ENCODE measurements at regions of chr17 and their contacts with region 1.

Region 1: GRCh38 chr17:46940621-46941404 is 17.9 kb downstream of the GOSR2 start:
- DNase-seq: peak; percentile 56 to 89
- H3K4me3 ChIP-seq: no peak overlapping the region
- H3K27ac ChIP-seq: no peak overlapping the region
- H3K4me1 ChIP-seq: peaks cover 6 to 16% (median 9%) of the 10 kb centered on the region in 4 experiments
- H3K27me3 ChIP-seq: no peaks in the 10 kb centered on the region
- CTCF ChIP-seq: peak; percentile 90 to 98 (median 90)
- EP300 ChIP-seq: no peak
- POLR2A ChIP-seq: no peak
- RAD21 ChIP-seq: peak; percentile 93 to 94

Region 2: GRCh38 chr17:46841561-46842379 is 99.0 kb before region 1 on chr17:
- CTCF ChIA-PET with region 1: interaction called, 81 read pairs
- POLR2A ChIA-PET with region 1: interaction called, 3 read pairs
- DNase-seq: peak in 1 of 2 experiments; percentile 92
- H3K4me3 ChIP-seq: peak overlapping the region; percentile 10 to 48 (median 40); a peak in 7 of 8 replicates
- H3K27ac ChIP-seq: no peak overlapping the region
- H3K4me1 ChIP-seq: no peaks in the 10 kb centered on the region; a peak in 1 of 7 replicates
- H3K27me3 ChIP-seq: peaks cover 3 to 12% (median 11%) of the 10 kb centered on the region in 4 experiments
- CTCF ChIP-seq: peak; percentile 85 to 96 (median 90)
- EP300 ChIP-seq: 0 out of 3 replicates have a peak, but pooled peaks of 1 of the 2 experiments have one; percentile 26
- POLR2A ChIP-seq: no peak
- RAD21 ChIP-seq: peak; percentile 77 to 87

Region 3: DNA sequence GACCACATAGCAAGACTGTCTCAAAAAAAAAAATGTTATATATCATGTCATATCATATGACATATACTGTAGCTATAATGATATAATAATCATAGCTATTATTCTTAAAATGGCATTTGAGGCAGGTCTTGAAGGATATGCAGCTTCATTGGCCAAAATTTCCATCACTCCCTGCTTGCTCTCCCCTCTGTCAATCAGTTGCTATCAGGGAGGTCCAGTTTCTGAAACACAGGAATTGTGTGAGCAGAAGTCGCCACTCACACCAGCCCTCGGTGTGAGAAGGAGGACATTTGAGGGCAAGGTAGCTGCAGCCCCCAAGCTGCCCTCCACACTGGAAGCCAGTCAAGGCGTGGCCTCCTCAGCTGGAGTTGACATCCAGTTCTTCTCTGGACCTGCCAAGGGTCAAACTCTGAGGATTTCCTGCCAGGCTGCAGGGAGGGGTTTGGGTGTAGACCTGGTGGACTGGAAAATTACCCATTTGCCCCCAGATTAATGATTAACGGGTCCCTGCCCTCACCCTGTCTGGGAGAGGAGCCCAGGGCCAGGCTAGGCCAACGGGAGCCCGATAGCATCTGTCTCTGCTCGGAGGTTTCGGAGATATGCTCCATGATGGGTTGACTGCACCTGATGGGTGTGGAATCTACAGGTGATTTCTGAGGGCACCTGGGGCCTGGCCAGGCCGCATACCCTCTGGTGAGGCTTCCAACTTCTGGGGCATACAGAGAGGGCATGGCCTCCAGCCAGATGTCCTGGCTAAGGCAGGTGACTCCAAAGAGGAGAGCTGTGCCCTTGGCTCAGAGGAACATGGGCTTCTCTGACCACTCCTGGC is 70.6 kb before region 1 on chr17:
- CTCF ChIA-PET with region 1: interaction called, 28 read pairs
- POLR2A ChIA-PET with region 1: no interaction called
- DNase-seq: no peak
- H3K4me3 ChIP-seq: no peak overlapping the region
- H3K27ac ChIP-seq: no peak overlapping the region
- H3K4me1 ChIP-seq: peaks cover 0 to 2% (median under 1%) of the 10 kb centered on the region in 4 experiments; a peak in 1 of 7 replicates
- H3K27me3 ChIP-seq: peaks cover 0 to 3% (median 0%) of the 10 kb centered on the region in 4 experiments; a peak in 2 of 7 replicates
- CTCF ChIP-seq: no peak
- EP300 ChIP-seq: no peak
- POLR2A ChIP-seq: no peak
- RAD21 ChIP-seq: no peak

Region 4: GRCh38 chr17:46964315-46965253 is 23.8 kb after region 1 on chr17:
- CTCF ChIA-PET with region 1: interaction called, 26 read pairs
- POLR2A ChIA-PET with region 1: interaction called, 26 read pairs
- DNase-seq: peak in 1 of 2 experiments; percentile 66
- H3K4me3 ChIP-seq: no peak overlapping the region
- H3K27ac ChIP-seq: no peak overlapping the region
- H3K4me1 ChIP-seq: no peaks in the 10 kb centered on the region
- H3K27me3 ChIP-seq: no peaks in the 10 kb centered on the region; a peak in 1 of 7 replicates
- CTCF ChIP-seq: no peak; a peak in 1 of 4 replicates
- EP300 ChIP-seq: no peak
- POLR2A ChIP-seq: no peak
- RAD21 ChIP-seq: no peak

Region 5: GRCh38 chr17:46995841-46996571 is 55.2 kb after region 1 on chr17:
- CTCF ChIA-PET with region 1: interaction called, 154 read pairs
- POLR2A ChIA-PET with region 1: interaction called, 5 read pairs
- DNase-seq: no peak
- H3K4me3 ChIP-seq: no peak overlapping the region
- H3K27ac ChIP-seq: no peak overlapping the region
- H3K4me1 ChIP-seq: no peaks in the 10 kb centered on the region
- H3K27me3 ChIP-seq: no peaks in the 10 kb centered on the region
- CTCF ChIP-seq: no peak
- EP300 ChIP-seq: no peak
- POLR2A ChIP-seq: no peak
- RAD21 ChIP-seq: no peak

Region 6: GRCh38 chr17:47145351-47145750 is 204.5 kb after region 1 on chr17:
- CTCF ChIA-PET with region 1: interaction called, 10 read pairs
- POLR2A ChIA-PET with region 1: no interaction called
- DNase-seq: no peak
- H3K4me3 ChIP-seq: no peak overlapping the region
- H3K27ac ChIP-seq: no peak overlapping the region
- H3K4me1 ChIP-seq: peaks cover 0 to 4% (median 1%) of the 10 kb centered on the region in 4 experiments; a peak in 2 of 7 replicates
- H3K27me3 ChIP-seq: no peaks in the 10 kb centered on the region
- CTCF ChIP-seq: no peak
- EP300 ChIP-seq: no peak
- POLR2A ChIP-seq: no peak
- RAD21 ChIP-seq: no peak